ENCODE measurements at regions of chr1 and their contacts with region 1.

Region 1: DNA sequence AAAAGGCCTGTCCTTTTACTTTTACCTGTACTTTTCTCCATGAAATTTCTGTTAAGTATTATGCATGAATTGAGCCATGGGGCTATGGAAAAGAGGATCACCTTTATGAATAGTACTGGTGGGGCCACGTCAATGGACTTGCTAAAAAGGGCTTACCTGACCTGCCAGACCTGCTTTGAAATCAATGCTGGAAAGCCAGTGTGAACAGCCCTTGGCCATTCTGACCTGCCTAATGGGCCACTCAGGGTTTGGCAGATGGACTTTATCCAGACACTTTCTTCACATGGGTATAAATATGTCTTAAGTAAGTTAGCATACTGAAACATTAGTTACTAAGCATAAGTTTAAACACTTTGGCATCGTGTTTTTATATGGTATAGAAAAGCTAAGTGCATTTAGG is 8.3 kb upstream of the GUK1 start:
- DNase-seq: no peak
- H3K4me3 ChIP-seq: no peak overlapping the region
- H3K27ac ChIP-seq: no peak overlapping the region
- H3K4me1 ChIP-seq: no peaks in the 10 kb centered on the region
- H3K27me3 ChIP-seq: peaks cover 28% of the 10 kb centered on the region
- CTCF ChIP-seq: no peak

Region 2: GRCh38 chr1:228256626-228257375 is 125.0 kb after region 1 on chr1:
- CTCF ChIA-PET with region 1: interaction called, 13 read pairs
- POLR2A ChIA-PET with region 1: no interaction called
- intact Hi-C with region 1: no loop called
- DNase-seq: no peak
- H3K4me3 ChIP-seq: no peak overlapping the region
- H3K27ac ChIP-seq: no peak overlapping the region
- H3K4me1 ChIP-seq: no peaks in the 10 kb centered on the region
- H3K27me3 ChIP-seq: no peaks in the 10 kb centered on the region
- CTCF ChIP-seq: no peak

Region 3: GRCh38 chr1:228515200-228515834 is 383.6 kb after region 1 on chr1:
- CTCF ChIA-PET with region 1: no interaction called
- POLR2A ChIA-PET with region 1: no interaction called
- intact Hi-C with region 1: loop called (anchors 5 kb)
- DNase-seq: peak; percentile 59
- H3K4me3 ChIP-seq: no peak overlapping the region
- H3K27ac ChIP-seq: no peak overlapping the region
- H3K4me1 ChIP-seq: no peaks in the 10 kb centered on the region
- H3K27me3 ChIP-seq: peaks cover 48% of the 10 kb centered on the region
- CTCF ChIP-seq: peak; percentile 70